ENCODE measurements at regions of chr21 and their contacts with region 1.

Region 1: DNA sequence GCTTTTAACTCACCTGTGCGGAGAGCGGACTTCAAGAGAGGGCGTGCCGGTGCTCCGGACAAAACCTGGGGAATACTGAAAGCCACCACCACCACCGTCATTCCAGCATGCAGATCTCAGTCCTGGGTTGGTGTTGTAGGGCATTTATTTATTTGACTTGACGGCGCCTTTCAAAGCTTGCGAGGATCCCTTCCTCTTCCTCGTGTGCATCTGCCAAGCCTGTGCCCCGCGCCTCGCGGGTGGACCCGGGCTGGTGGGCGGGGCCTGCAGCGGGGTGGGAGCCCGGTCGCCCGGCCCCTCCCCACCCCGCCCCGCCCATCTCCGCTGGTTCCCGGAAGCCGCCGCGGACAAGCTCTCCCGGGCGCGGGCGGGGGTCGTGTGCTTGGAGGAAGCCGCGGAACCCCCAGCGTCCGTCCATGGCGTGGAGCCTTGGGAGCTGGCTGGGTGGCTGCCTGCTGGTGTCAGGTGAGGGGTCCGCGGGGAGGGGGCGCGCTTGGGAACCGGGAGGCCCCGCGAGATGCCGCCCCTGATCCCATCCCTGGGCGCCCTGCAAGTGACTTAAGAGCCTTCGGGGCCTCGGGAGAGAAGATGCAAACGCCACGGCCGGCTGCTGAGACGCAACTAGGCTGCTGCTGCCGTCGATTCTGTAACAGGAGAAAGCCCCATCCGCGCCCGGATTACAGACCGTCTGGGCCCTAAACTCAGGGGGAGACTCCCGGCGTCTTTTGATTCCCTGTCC is at the start of gene IL10RB:
- DNase-seq: peak; percentile 27
- ATAC-seq: peak; percentile 72
- H3K4me3 ChIP-seq: peak within 1 kb of the TSS; percentile 81
- H3K27ac ChIP-seq: peak within 1 kb of the TSS; percentile 96
- H3K4me1 ChIP-seq: peaks cover 28% of the 10 kb centered on the region
- H3K27me3 ChIP-seq: no peaks in the 10 kb centered on the region
- CTCF ChIP-seq: no peak
- EP300 ChIP-seq: no peak
- POLR2A ChIP-seq: peak; percentile 88
- RAD21 ChIP-seq: no peak
- polyA plus RNA-seq, gene IL10RB: 15.0 to 23.3 TPM

Region 2: DNA sequence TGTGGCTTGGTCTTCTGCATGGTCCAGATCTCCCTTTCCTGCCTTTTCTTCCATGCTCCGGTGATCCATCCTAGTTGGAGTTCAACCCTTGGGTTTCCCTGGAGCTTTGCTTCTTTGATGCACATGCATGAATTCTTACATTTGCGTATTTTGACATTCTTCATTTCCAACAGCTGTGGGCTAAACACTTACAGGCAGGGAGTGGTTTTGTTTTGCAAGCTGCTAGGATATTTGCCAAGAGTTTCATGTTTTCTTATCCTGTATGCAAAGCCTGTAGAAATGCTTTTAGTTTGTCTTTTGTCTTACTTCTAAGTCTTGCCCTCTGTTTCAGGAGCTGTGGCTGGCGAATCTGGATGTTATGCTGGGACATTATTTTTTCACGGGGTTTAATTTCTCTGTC is 404.4 kb before region 1 on chr21:
- CTCF ChIA-PET with region 1: no interaction called
- POLR2A ChIA-PET with region 1: no interaction called
- RAD21 ChIA-PET with region 1: no interaction called
- SMC1A ChIA-PET with region 1: no interaction called
- in situ Hi-C with region 1: no loop called
- intact Hi-C with region 1: no loop called
- DNase-seq: no peak
- ATAC-seq: no peak
- H3K4me3 ChIP-seq: no peak overlapping the region
- H3K27ac ChIP-seq: no peak overlapping the region
- H3K4me1 ChIP-seq: no peaks in the 10 kb centered on the region
- H3K27me3 ChIP-seq: no peaks in the 10 kb centered on the region
- CTCF ChIP-seq: no peak
- EP300 ChIP-seq: no peak
- POLR2A ChIP-seq: no peak
- RAD21 ChIP-seq: no peak

Region 3: DNA sequence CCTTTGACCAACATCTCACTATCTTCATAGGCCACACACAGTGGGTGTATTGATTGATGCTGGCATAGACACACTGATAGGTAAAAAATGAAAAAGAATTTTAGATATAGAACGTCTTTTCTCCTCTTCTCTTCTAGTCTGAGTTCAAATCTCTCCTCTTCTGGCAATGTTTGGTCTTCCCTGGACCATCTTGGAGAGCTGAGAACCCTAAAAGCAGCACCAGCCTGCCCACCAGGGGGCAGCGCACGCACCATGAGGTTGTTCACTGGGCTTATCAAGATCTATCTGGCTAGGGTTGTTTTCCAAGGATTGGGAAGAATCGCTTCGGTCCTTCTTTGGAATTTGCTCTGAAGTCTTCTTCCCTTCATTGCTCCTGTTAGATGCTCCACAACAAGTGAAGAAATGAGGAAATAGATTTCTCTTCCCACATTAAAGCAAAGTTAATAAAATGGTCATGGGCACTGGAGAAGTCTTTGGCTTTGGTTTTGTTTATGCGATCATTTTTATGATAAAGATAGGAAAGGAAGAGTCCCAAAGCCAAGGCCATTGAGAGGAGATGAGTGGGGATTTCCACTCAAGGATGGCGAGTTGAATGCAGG is 344.5 kb before region 1 on chr21:
- CTCF ChIA-PET with region 1: no interaction called
- POLR2A ChIA-PET with region 1: no interaction called
- RAD21 ChIA-PET with region 1: no interaction called
- SMC1A ChIA-PET with region 1: no interaction called
- in situ Hi-C with region 1: no loop called
- intact Hi-C with region 1: no loop called
- DNase-seq: no peak
- ATAC-seq: peak; percentile 48; the same call in 2 of the 3 replicates
- H3K4me3 ChIP-seq: no peak overlapping the region
- H3K27ac ChIP-seq: no peak overlapping the region
- H3K4me1 ChIP-seq: no peaks in the 10 kb centered on the region
- H3K27me3 ChIP-seq: no peaks in the 10 kb centered on the region
- CTCF ChIP-seq: peak; percentile 42 to 56 (median 42); a peak in 5 of 6 replicates
- EP300 ChIP-seq: no peak
- POLR2A ChIP-seq: no peak
- RAD21 ChIP-seq: peak; percentile 51

Region 4: DNA sequence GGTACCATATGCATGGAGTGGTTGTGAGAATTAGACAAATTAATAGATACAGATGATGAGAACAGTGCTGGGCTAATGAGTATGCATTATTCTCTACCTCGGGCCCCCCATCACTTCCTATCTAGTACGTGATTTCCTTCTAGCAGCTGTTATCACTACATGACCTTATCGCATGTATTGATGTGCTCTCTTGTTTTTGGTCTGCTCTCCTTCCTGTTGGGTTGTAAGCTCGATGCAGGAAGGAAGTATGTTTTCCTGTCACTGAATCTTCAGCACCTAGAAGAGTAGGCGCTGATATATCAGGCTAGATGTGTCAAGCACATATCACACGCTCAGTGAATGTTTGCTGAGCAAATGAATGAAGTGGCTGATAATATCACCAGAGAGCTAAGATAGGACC is 80.4 kb before region 1 on chr21:
- CTCF ChIA-PET with region 1: no interaction called
- POLR2A ChIA-PET with region 1: no interaction called
- RAD21 ChIA-PET with region 1: no interaction called
- SMC1A ChIA-PET with region 1: no interaction called
- in situ Hi-C with region 1: no loop called
- intact Hi-C with region 1: no loop called
- DNase-seq: no peak
- ATAC-seq: no peak
- H3K4me3 ChIP-seq: no peak overlapping the region
- H3K27ac ChIP-seq: no peak overlapping the region
- H3K4me1 ChIP-seq: no peaks in the 10 kb centered on the region
- H3K27me3 ChIP-seq: no peaks in the 10 kb centered on the region
- CTCF ChIP-seq: no peak
- EP300 ChIP-seq: no peak
- POLR2A ChIP-seq: no peak
- RAD21 ChIP-seq: no peak

Region 5: GRCh38 chr21:33205476-33205875 is 60.7 kb before region 1 on chr21:
- CTCF ChIA-PET with region 1: interaction called, 7 read pairs
- POLR2A ChIA-PET with region 1: interaction called, 13 read pairs
- RAD21 ChIA-PET with region 1: interaction called, 14 read pairs
- SMC1A ChIA-PET with region 1: interaction called, 21 read pairs
- in situ Hi-C with region 1: no loop called
- intact Hi-C with region 1: loop called (anchors 2 kb)
- DNase-seq: no peak
- ATAC-seq: peak; percentile 29
- H3K4me3 ChIP-seq: no peak overlapping the region
- H3K27ac ChIP-seq: peak overlapping the region; percentile 51
- H3K4me1 ChIP-seq: peaks cover 19% of the 10 kb centered on the region
- H3K27me3 ChIP-seq: no peaks in the 10 kb centered on the region
- CTCF ChIP-seq: peak in 1 of 3 experiments; percentile 8; a peak in 1 of 6 replicates
- EP300 ChIP-seq: no peak
- POLR2A ChIP-seq: no peak
- RAD21 ChIP-seq: no peak

Region 6: DNA sequence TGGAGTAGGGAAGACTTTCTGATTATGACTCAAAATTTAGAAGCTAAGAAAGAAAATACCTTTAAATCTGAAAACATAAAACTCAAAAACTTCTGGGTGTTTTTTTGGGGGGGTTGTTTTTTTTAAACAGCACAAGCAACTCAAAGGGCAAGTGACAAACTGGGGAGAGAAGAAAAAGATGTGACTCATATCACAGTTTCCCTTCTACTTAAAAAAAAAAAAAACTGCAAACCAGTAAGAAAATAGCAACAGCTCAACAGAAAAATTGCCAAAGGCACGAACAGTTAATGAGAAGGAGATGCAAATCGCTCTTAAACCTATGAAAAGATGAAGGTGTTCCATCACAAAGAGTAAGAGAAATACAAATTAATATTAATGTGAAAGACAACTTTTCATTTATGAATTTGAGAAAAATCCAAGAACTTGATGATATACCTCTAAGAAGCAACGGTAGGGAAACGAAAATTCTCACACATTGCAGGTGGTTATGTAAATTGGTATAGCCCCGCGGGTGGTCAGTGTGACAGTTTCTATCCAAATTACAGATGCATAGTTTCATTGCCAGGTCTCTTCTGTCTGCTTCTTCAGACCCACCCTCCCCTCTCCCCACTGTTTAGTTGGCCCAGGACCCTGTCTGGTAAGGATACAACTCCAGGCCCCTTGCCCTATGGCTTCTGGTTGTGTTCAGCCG is 27.5 kb before region 1 on chr21:
- CTCF ChIA-PET with region 1: interaction called, 16 read pairs
- POLR2A ChIA-PET with region 1: interaction called, 38 read pairs
- RAD21 ChIA-PET with region 1: interaction called, 51 read pairs
- SMC1A ChIA-PET with region 1: interaction called, 92 read pairs
- in situ Hi-C with region 1: no loop called
- intact Hi-C with region 1: no loop called
- DNase-seq: peak; percentile 76
- ATAC-seq: peak; percentile 79
- H3K4me3 ChIP-seq: peak overlapping the region; percentile 66
- H3K27ac ChIP-seq: peak overlapping the region; percentile 86
- H3K4me1 ChIP-seq: peaks cover 56% of the 10 kb centered on the region
- H3K27me3 ChIP-seq: no peaks in the 10 kb centered on the region
- CTCF ChIP-seq: no peak
- EP300 ChIP-seq: peak; percentile 79 to 96
- POLR2A ChIP-seq: 0 out of 2 replicates have a peak, but pooled peaks have one; percentile 40
- RAD21 ChIP-seq: 0 out of 2 replicates have a peak, but pooled peaks have one; percentile 10

Region 7: GRCh38 chr21:33293136-33293535 is 26.9 kb after region 1 on chr21:
- CTCF ChIA-PET with region 1: no interaction called
- POLR2A ChIA-PET with region 1: no interaction called
- RAD21 ChIA-PET with region 1: no interaction called
- SMC1A ChIA-PET with region 1: no interaction called
- in situ Hi-C with region 1: no loop called
- intact Hi-C with region 1: no loop called
- DNase-seq: no peak
- ATAC-seq: no peak
- H3K4me3 ChIP-seq: no peak overlapping the region
- H3K27ac ChIP-seq: no peak overlapping the region
- H3K4me1 ChIP-seq: peaks cover 9% of the 10 kb centered on the region
- H3K27me3 ChIP-seq: no peaks in the 10 kb centered on the region
- CTCF ChIP-seq: no peak
- EP300 ChIP-seq: no peak
- POLR2A ChIP-seq: no peak
- RAD21 ChIP-seq: no peak

Region 8: GRCh38 chr21:33324291-33325221 is 58.3 kb after region 1 on chr21 and contains the start of gene IFNAR1:
- CTCF ChIA-PET with region 1: interaction called, 4 read pairs
- POLR2A ChIA-PET with region 1: interaction called, 9 read pairs
- RAD21 ChIA-PET with region 1: interaction called, 29 read pairs
- SMC1A ChIA-PET with region 1: interaction called, 17 read pairs
- in situ Hi-C with region 1: no loop called
- intact Hi-C with region 1: loop called (anchors 5 kb)
- DNase-seq: peak; percentile 91
- ATAC-seq: peak; percentile 91
- H3K4me3 ChIP-seq: peak within 1 kb of the TSS; percentile 85
- H3K27ac ChIP-seq: peak within 1 kb of the TSS; percentile 97
- H3K4me1 ChIP-seq: peaks cover 4% of the 10 kb centered on the region; the same call in 1 of the 2 replicates
- H3K27me3 ChIP-seq: no peaks in the 10 kb centered on the region
- CTCF ChIP-seq: no peak
- EP300 ChIP-seq: no peak
- POLR2A ChIP-seq: peak; percentile 93
- RAD21 ChIP-seq: no peak
- polyA plus RNA-seq, gene IFNAR1: 25.6 to 30.9 TPM

Region 9: GRCh38 chr21:33434770-33435360 is 168.6 kb after region 1 on chr21:
- CTCF ChIA-PET with region 1: no interaction called
- POLR2A ChIA-PET with region 1: interaction called, 3 read pairs
- RAD21 ChIA-PET with region 1: interaction called, 6 read pairs
- SMC1A ChIA-PET with region 1: interaction called, 11 read pairs
- in situ Hi-C with region 1: no loop called
- intact Hi-C with region 1: no loop called
- DNase-seq: peak; percentile 99
- ATAC-seq: peak; percentile 89
- H3K4me3 ChIP-seq: no peak overlapping the region
- H3K27ac ChIP-seq: peak overlapping the region; percentile 92
- H3K4me1 ChIP-seq: peaks cover 41% of the 10 kb centered on the region
- H3K27me3 ChIP-seq: no peaks in the 10 kb centered on the region
- CTCF ChIP-seq: no peak
- EP300 ChIP-seq: peak in 1 of 2 experiments; percentile 77; a peak in 2 of 4 replicates
- POLR2A ChIP-seq: no peak
- RAD21 ChIP-seq: no peak